Right ventricle myocardium inferior (tissue), 1 donor: ENCODE measurements at regions of chr12 and their contacts with region 1.

Region 1: GRCh38 chr12:122642009-122642408 is 61.1 kb downstream of the HCAR2 start:
- DNase-seq: no peak
- ATAC-seq: no peak

Region 2: DNA sequence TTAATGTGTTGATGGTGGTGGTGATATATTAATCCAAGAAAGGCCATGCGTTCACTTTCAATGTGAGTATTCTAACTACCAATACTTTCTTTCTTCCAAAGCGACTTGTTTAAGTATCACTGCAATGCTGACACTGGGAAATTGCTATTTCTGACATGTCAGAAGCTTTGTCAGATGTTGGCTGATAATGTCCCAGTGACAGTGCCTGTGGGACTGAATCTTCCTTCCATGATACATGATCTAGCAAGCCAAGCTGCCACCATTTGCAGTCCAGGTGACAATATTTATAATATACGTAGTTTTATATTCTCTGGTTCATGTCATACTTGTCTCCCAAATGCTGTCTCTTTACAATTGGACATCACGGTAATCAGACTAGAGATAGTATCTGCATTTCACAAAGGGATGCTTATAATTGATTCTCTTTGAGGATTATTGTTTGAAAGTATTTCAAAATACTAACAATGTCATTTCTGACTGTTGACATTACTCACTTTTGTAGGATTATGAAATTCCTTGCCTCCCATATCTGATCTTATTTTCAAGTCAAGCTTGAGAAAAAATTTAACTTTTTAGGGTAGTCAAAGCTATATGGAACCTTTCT is 57.7 kb before region 1 on chr12:
- intact Hi-C with region 1: no loop called
- DNase-seq: no peak
- ATAC-seq: no peak

Region 3: DNA sequence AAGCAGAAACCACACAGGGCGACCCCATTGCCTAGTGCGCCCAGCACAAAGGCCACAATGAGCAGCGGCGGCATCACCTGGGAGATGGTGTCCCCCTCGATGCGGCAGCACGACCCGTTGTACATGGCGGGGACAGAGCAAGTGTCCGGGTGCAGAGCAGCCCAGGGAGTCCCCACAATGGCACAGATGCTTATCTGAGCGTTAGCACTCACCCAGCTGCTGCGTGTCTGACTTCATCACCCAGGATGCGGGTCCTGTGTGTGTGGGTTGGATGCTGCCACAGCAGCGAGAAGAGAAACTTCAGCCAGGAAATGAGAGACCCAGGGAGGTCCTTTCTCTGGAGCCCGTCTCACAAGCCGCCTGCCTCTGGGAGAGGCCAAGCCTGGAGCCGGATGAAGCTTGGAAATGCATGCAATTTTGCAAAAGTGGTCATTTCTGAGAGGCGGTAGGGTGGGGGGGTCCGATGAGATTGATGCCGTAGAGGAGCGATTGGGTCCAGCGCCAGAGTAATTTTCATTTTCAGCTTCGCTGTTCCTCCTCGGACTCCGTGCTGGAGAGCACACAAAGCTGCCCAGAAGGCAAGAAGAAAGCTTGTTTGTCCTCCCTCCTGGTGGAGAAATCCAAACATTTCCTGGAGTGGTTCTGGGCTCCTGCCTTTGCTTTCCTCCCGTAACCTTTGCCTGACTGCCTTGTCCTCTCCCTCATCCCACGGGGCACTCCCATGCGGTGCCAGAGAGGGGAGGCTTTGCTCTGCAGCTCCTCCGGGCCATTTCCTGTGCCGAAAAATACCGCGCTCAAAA is 88.4 kb after region 1 on chr12 and contains the start of gene HCAR1:
- intact Hi-C with region 1: no loop called
- DNase-seq: no peak
- ATAC-seq: no peak
- total RNA-seq, gene HCAR1: 0.08 TPM

Region 4: GRCh38 chr12:122752464-122753318 is 110.7 kb after region 1 on chr12 and contains the start of gene DENR:
- intact Hi-C with region 1: loop called (anchors 1 kb)
- DNase-seq: peak; percentile 98
- ATAC-seq: peak; percentile 99
- total RNA-seq, gene DENR: 28.1 TPM